ENCODE measurements at regions of chrX and their contacts with region 1.

Region 1: GRCh38 chrX:38282044-38282443 is 45.3 kb downstream of the RPGR start:
- DNase-seq: no peak
- H3K4me3 ChIP-seq: no peak overlapping the region
- CTCF ChIP-seq: peak; percentile 45

Region 2: GRCh38 chrX:38192007-38192810 is 89.8 kb before region 1 on chrX:
- CTCF ChIA-PET with region 1: interaction called, 35 read pairs
- POLR2A ChIA-PET with region 1: no interaction called
- DNase-seq: no peak
- H3K4me3 ChIP-seq: no peak overlapping the region
- CTCF ChIP-seq: peak; percentile 33

Region 3: GRCh38 chrX:38220024-38220414 is 62.0 kb before region 1 on chrX:
- CTCF ChIA-PET with region 1: interaction called, 19 read pairs
- POLR2A ChIA-PET with region 1: no interaction called
- DNase-seq: no peak
- H3K4me3 ChIP-seq: peak overlapping the region; percentile 65
- CTCF ChIP-seq: peak; percentile 36

Region 4: GRCh38 chrX:38293741-38294140 is 11.7 kb after region 1 on chrX:
- CTCF ChIA-PET with region 1: interaction called, 25 read pairs
- POLR2A ChIA-PET with region 1: no interaction called
- DNase-seq: no peak
- H3K4me3 ChIP-seq: no peak overlapping the region
- CTCF ChIP-seq: peak; percentile 2